OCI-LY7 (cell line): ENCODE measurements at regions of chr15 and their contacts with region 1.

Region 1: GRCh38 chr15:81296673-81297072 is 27.3 kb downstream of the STARD5 start:
- DNase-seq: peak; percentile 94
- H3K4me3 ChIP-seq: peak overlapping the region; percentile 92
- H3K27ac ChIP-seq: peak overlapping the region; percentile 98
- H3K4me1 ChIP-seq: peaks cover 73% of the 10 kb centered on the region
- CTCF ChIP-seq: no peak

Region 2: DNA sequence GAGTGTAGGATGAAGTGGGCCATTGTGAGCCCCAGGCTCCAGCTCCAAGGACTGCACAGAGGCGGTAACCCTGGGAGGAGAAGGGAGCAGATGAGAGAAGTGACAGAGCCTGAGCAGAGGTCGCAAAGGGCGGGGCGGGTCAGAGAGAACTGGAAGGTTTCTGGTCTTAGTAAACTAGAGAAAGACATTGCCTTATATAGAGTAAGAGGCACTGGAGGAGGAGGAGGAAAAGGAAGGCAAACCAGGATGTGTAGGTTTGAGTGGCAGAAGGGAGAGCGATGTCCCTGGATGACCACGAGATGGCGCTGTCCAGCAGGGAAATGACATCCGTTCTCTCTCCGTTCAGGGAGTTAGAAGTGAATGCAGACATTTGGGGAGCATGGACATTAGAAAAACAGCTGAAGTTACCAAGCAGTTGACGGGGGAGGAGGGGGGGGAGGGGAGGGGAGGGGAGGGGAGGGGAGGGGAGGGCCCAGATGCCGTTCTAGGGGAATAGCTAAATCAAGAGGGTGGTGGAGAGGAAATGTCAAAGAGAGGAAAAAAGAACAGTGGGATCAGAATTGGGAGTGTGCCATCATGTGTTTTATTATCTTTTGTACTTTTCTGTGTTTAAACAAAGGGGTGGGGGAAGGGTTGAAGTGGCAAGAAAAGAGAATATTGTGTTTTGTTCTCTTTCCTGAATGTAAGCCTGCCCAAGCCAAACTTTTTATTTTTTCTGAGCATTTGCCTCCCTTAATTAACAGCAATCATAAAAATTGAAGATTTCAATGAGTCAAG is 21.6 kb before region 1 on chr15:
- CTCF ChIA-PET with region 1: interaction called, 6 read pairs
- POLR2A ChIA-PET with region 1: interaction called, 5 read pairs
- intact Hi-C with region 1: loop called (anchors 1 kb)
- DNase-seq: peak; percentile 89
- H3K4me3 ChIP-seq: no peak overlapping the region
- H3K27ac ChIP-seq: no peak overlapping the region
- H3K4me1 ChIP-seq: peaks cover 10% of the 10 kb centered on the region
- CTCF ChIP-seq: peak; percentile 84

Region 3: GRCh38 chr15:81311752-81312464 is 15.2 kb after region 1 on chr15:
- CTCF ChIA-PET with region 1: interaction called, 5 read pairs
- POLR2A ChIA-PET with region 1: interaction called, 12 read pairs
- intact Hi-C with region 1: loop called (anchors 1 kb)
- DNase-seq: peak; percentile 60
- H3K4me3 ChIP-seq: no peak overlapping the region
- H3K27ac ChIP-seq: peak overlapping the region; percentile 41
- H3K4me1 ChIP-seq: peaks cover 52% of the 10 kb centered on the region
- CTCF ChIP-seq: no peak

Region 4: GRCh38 chr15:81323944-81324881 is 27.5 kb after region 1 on chr15 and contains the start of gene STARD5:
- CTCF ChIA-PET with region 1: interaction called, 10 read pairs
- POLR2A ChIA-PET with region 1: interaction called, 12 read pairs
- intact Hi-C with region 1: loop called (anchors 2 kb)
- DNase-seq: peak; percentile 96
- H3K4me3 ChIP-seq: peak within 1 kb of the TSS; percentile 78
- H3K27ac ChIP-seq: no peak within 1 kb of the TSS
- H3K4me1 ChIP-seq: peaks cover 42% of the 10 kb centered on the region
- CTCF ChIP-seq: no peak
- total RNA-seq, gene STARD5: 12.4 and 20.3 TPM in 2 replicates